Activated naive CD4-positive, alpha-beta T cell treated with anti-CD3 and anti-CD28 coated beads for 36 hours (primary cell): ENCODE measurements at regions of chr15 and their contacts with region 1.

Region 1: DNA sequence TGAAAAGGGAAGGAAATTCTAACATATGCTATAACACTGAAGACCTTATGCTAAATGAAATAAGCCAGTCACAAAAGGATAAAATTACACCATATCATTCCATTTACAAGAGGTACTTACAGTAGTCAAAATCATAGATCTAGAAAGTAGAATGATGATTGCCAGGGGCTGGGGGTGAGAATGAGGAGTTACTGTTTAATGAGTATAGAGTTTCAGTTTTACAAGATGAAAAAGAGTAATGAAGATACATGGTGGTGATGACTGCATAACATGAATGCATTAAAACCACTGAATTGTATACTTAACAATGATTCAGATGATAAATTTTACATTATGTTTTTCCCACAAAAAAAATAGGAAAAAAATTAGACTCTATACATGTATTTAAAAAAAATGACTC is 152.6 kb downstream of the SCAPER start:
- DNase-seq: peak; percentile 49
- H3K4me3 Mint-ChIP-seq: no peak overlapping the region
- H3K27ac Mint-ChIP-seq: no peak overlapping the region
- H3K4me1 Mint-ChIP-seq: peaks cover 19% of the 10 kb centered on the region
- H3K27me3 Mint-ChIP-seq: no peaks in the 10 kb centered on the region

Region 2: DNA sequence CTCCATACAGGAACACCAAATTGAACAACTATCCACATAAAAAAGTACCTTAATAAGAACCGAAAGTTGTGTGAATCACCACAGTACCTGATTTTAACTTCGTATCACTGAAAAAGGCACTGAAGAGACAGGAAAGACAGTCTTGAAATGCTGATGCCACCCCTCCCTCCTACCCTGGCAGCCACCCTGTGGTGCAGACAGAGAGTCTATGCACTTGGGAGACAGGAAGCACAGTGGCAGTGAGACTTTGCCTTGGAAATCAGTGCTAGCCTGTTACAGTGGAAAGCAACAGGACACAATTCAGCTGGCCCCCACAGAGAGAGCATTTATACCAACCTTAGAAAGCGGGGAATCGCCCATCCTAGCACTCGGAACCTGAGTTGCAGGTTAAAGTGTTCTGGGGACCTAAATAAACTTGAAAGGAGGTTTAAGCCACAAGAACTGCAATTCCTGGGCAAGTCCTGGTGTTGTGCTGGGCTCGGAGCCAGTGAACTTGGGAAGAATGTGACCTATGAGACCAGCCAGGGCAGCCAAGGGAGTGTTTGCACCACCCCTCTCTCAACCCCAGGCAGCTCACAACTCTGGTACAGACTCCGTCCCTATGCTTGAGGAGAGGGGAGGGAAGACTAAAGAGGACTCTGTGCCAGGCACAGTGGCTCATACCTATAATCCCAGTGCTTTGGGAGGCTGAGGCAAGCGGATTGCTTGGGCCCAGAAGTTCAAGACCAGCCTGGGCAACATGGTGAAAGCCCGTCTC is 175.8 kb before region 1 on chr15:
- CTCF ChIA-PET with region 1: no interaction called
- intact Hi-C with region 1: loop called (anchors 5 kb)
- DNase-seq: peak; percentile 35
- H3K4me3 Mint-ChIP-seq: no peak overlapping the region
- H3K27ac Mint-ChIP-seq: no peak overlapping the region
- H3K4me1 Mint-ChIP-seq: peaks cover 27% of the 10 kb centered on the region
- H3K27me3 Mint-ChIP-seq: no peaks in the 10 kb centered on the region

Region 3: DNA sequence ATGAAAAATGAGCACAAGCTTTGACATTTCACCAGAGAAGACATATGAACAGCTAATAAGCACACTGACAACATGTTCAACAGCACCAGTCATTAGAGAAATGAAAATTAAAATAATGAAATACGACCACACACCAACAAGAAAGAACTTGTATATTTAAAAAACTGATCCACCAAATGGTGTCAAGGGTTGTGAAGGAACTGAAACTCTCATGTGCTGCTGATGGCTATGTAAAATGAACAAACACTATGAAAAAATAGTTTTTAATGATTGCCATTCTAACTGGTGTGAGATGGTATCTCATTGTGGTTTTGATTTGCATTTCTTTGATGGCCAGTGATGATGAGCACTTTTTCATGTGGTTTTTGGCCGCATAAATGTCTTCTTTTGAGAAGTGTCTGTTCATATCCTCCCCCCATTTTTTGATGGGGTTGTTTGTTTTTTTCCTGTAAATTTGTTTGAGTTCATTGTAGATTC is 41.2 kb before region 1 on chr15:
- CTCF ChIA-PET with region 1: no interaction called
- intact Hi-C with region 1: no loop called
- DNase-seq: no peak
- H3K4me3 Mint-ChIP-seq: no peak overlapping the region
- H3K27ac Mint-ChIP-seq: no peak overlapping the region
- H3K4me1 Mint-ChIP-seq: peaks cover 5% of the 10 kb centered on the region
- H3K27me3 Mint-ChIP-seq: no peaks in the 10 kb centered on the region

Region 4: DNA sequence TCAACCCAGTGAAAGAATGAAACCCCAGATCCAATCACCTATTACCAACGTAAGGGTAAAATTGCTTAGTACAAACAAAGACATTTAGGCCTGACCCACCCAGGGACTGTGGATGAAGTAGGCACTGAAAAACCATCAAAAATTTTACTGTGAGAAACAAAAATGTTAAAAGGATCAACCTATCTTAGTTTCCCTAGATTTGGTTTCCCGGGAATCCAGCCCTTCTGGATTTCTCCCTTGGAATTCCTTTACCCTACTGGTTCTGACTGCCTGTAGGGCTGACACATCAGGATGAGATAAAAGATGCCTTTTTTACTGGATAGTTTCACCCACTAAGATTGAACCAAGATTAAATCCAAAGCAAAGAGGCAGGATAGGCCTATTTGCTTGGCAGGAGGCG is 49.9 kb after region 1 on chr15:
- CTCF ChIA-PET with region 1: no interaction called
- intact Hi-C with region 1: no loop called
- DNase-seq: no peak
- H3K4me3 Mint-ChIP-seq: no peak overlapping the region
- H3K27ac Mint-ChIP-seq: no peak overlapping the region
- H3K4me1 Mint-ChIP-seq: no peaks in the 10 kb centered on the region
- H3K27me3 Mint-ChIP-seq: no peaks in the 10 kb centered on the region